Activated T-helper 1 cell treated with anti-CD3 and anti-CD28 coated beads, Interleukin-12 subunit alpha, Interleukin-12 subunit beta, Interleukin-2, Interleukin-4 antibody, amounts not matched to agents 30 ng/mL and 10 ng/mL and 1 ng/mL, durations not matched to agents 14 hours and 24 hours and 36 hours (primary cell): ENCODE measurements at regions of chr14 and their contacts with region 1.

Region 1: DNA sequence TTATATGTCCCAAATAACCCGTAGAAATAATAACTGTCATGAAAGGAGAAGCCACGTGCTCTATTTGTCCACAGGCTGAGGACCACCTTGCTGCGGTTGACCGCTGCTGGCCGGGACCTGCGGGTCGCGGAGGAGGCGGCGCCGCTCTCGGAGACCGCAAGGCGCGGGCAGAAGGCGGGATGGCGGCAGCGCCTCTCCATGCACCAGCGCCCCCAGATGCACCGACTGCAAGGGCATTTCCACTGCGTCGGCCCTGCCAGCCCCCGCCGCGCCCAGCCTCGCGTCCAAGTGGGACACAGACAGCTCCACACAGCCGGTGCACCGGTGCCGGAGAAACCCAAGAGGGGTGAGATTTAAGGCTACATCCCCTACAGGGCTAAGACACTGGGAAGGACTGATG is 21.0 kb downstream of the RPGRIP1 start:
- DNase-seq: no peak
- H3K4me3 Mint-ChIP-seq: no peak overlapping the region
- H3K27ac Mint-ChIP-seq: no peak overlapping the region
- H3K4me1 Mint-ChIP-seq: no peaks in the 10 kb centered on the region
- H3K27me3 Mint-ChIP-seq: peaks cover 33% of the 10 kb centered on the region

Region 2: GRCh38 chr14:21343035-21343794 is 42.3 kb after region 1 on chr14:
- intact Hi-C with region 1: loop called (anchors 5 kb)
- DNase-seq: no peak
- H3K4me3 Mint-ChIP-seq: no peak overlapping the region
- H3K27ac Mint-ChIP-seq: no peak overlapping the region
- H3K4me1 Mint-ChIP-seq: peaks cover 10% of the 10 kb centered on the region
- H3K27me3 Mint-ChIP-seq: peaks cover 3% of the 10 kb centered on the region

Region 3: DNA sequence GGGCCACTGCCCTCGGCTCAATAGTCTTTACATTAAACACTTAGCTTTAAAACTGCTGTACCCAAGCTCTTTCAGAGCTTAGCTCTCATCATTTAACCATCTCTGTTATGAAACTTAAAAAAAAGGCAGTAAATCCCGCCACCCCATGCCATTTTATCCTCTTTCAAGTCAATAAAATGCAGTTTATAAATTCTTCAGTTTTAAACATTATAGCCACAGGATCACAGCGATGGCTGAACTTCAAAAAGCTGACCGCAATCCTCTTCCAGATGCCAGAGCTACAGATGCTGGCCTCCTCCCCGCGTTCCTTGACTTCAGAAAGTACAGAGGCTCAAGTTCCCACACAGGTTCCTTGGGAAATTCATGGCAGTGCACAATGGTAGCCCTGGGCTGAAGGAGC is 274.8 kb after region 1 on chr14:
- intact Hi-C with region 1: no loop called
- DNase-seq: no peak
- H3K4me3 Mint-ChIP-seq: no peak overlapping the region
- H3K27ac Mint-ChIP-seq: no peak overlapping the region
- H3K4me1 Mint-ChIP-seq: no peaks in the 10 kb centered on the region
- H3K27me3 Mint-ChIP-seq: peaks cover 8% of the 10 kb centered on the region